Breast epithelium (tissue), 4 donors: ENCODE measurements at regions of chr4 and their contacts with region 1.

Region 1: DNA sequence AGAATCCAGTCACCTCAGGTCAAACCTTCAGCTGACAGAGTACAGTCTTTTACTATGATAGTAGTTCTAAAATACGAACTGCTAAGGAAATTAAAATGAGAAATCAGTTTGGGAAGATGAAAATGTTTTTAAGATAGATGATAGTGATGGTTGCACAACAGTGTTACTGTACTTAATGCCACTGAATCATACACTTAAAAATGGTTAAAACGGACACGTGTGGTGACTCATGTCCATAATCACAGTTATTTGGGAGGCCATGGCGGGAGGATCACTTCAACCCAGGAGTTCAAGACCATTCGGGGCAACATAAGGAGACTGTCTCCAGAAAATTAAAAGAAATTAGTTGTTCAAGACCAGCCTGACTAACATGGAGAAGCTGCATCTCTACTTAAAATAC is 41.4 kb downstream of the ABHD18 start:
- DNase-seq: no peak
- H3K4me3 ChIP-seq: no peak overlapping the region
- H3K27ac ChIP-seq: no peak overlapping the region
- H3K4me1 ChIP-seq: no peaks in the 10 kb centered on the region
- H3K27me3 ChIP-seq: no peaks in the 10 kb centered on the region
- CTCF ChIP-seq: no peak
- POLR2A ChIP-seq: no peak

Region 2: GRCh38 chr4:127917151-127917550 is 89.4 kb before region 1 on chr4:
- intact Hi-C with region 1: loop called (anchors 10 kb)
- DNase-seq: no peak
- H3K4me3 ChIP-seq: no peak overlapping the region
- H3K27ac ChIP-seq: no peak overlapping the region
- H3K4me1 ChIP-seq: no peaks in the 10 kb centered on the region
- H3K27me3 ChIP-seq: no peaks in the 10 kb centered on the region
- CTCF ChIP-seq: no peak
- POLR2A ChIP-seq: no peak

Region 3: DNA sequence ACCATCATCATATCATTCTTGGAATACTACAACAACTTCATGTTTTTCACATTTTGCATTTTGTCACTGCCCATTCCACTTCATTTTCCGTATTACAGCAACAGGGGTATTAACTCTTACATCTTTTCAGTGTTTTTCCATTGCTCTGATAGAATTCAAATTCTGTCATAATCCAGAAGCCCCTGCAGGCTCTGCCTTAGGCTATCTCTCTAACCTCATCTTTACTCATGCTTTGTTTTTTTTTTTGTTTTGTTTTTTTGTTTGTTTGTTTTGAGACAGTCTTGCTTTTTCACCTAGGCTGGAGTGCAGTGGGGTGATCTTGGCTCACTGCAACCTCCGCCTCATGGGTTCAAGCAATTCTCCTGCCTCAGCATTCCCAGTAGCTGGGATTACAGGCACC is 50.2 kb after region 1 on chr4:
- intact Hi-C with region 1: loop called (anchors 2 kb)
- DNase-seq: no peak
- H3K4me3 ChIP-seq: no peak overlapping the region
- H3K27ac ChIP-seq: no peak overlapping the region
- H3K4me1 ChIP-seq: no peaks in the 10 kb centered on the region
- H3K27me3 ChIP-seq: no peaks in the 10 kb centered on the region
- CTCF ChIP-seq: no peak
- POLR2A ChIP-seq: no peak

Region 4: DNA sequence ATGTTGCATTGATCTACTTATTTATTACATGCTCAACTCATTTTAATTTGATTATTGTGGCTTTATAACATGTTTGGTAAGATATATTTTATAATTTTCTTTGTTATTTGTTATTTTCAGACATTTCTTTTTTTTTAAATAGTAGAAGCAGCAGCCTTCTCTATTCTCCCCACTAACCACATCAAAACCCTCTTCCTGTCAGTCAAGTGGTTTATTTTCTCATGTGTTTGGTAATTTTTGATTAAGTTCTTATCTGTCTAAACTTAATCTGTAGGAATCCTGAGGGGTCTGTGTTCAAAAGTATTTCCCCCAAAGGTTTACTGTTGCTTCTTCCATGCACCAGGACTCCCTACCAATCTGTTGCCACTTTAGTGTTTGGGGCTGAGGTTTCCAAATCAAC is 954.8 kb after region 1 on chr4:
- intact Hi-C with region 1: no loop called
- DNase-seq: no peak
- H3K4me3 ChIP-seq: no peak overlapping the region
- H3K27ac ChIP-seq: no peak overlapping the region
- H3K4me1 ChIP-seq: no peaks in the 10 kb centered on the region
- H3K27me3 ChIP-seq: no peaks in the 10 kb centered on the region
- CTCF ChIP-seq: no peak
- POLR2A ChIP-seq: no peak